ENCODE measurements at regions of chr11 and their contacts with region 1.

Region 1: DNA sequence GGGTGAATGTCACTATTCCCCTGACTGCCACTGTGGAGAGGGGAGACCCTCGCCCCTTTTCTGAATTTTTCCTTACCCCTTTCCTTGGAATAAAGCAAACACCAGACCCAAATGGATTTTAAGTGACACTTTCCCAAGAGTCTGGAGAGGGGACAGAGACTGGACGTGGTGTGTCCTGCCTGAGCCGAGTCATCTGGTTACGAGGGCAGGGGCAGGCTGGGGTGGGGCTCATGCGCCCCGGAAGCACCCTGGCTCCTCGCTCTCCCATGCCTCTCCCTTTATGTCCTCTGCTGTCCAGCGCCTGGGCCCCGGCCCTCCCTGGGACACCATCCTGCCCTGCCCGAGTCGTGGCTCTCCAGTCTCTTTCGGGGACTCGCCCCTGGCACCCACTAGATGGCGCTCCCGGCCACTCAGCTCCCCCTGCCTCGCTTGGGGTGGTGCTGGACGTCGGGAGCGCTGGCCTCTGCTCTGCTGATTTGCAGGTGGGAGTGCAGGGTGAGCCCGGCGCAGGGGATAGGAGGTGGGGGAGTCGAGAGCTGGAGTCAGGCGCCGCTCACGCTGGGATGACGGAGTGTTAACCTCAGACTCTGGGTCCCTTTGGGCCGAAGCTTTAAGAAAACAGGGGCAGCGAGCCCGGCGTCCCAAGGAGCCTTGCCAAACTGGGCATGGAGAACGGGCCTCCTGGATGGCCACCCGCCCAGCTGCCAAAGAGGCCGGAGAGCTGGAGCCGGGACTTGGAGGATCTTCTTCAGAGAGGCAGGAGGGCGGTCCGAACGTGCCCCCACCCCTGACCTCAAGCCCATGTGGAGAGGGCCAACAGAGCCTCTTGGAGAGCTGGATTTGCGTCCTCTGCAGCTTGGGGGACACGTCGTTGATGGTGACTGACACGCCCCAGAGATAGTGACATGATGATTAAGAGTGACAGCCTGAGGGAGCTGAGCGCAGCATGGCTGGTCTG is 89.9 kb downstream of the RPS6KA4 start:
- DNase-seq: peak; percentile 72
- ATAC-seq: peak; percentile 92
- H3K4me3 ChIP-seq: peak overlapping the region; percentile 48 to 59
- H3K27ac ChIP-seq: no peak overlapping the region; the same call in 1 of the 2 replicates
- H3K4me1 ChIP-seq: peaks cover 14 to 23% of the 10 kb centered on the region in 2 experiments
- H3K27me3 ChIP-seq: no peaks in the 10 kb centered on the region
- CTCF ChIP-seq: peak; percentile 88 to 94 (median 91)
- POLR2A ChIP-seq: no peak
- RAD21 ChIP-seq: peak; percentile 75

Region 2: DNA sequence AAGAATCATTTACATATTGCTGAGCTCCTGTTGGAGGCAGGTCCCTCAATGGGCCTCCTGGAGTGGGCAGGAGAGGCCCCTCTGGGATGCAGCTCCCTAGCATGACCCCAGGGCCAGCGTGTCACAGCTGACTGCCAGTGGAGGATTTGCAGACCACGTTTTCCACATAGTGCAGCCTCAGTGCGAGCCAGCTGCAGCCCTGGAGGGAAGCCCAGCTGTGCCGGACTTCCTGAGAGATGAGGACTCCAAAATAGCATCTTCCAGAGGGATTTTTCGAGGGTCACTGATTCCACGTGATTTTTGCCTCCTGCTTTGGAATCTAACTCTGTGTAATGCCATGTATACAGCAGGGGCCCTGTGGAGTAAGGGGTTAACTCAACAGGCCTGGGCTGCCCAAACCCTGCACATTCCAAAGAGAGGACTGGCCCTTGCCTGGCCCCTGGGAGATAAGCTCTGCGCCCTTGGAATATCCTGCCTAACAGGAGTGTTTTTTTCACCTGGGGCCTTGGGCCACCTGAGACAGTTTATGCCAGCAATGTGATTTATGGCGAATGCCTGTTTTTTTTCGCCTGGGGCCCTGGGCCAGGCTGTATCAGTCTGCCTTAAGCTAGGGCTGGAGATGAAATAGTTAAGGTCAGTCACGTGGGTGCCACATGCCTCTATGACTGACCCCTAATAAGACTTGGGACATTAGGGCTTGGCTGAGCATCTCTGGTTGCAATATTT is 42.5 kb before region 1 on chr11:
- CTCF ChIA-PET with region 1: interaction called, 11 read pairs
- POLR2A ChIA-PET with region 1: no interaction called
- RAD21 ChIA-PET with region 1: no interaction called
- intact Hi-C with region 1: no loop called
- DNase-seq: no peak
- ATAC-seq: no peak
- H3K4me3 ChIP-seq: no peak overlapping the region
- H3K27ac ChIP-seq: no peak overlapping the region
- H3K4me1 ChIP-seq: no peaks in the 10 kb centered on the region
- H3K27me3 ChIP-seq: no peaks in the 10 kb centered on the region
- CTCF ChIP-seq: no peak
- POLR2A ChIP-seq: no peak
- RAD21 ChIP-seq: no peak

Region 3: DNA sequence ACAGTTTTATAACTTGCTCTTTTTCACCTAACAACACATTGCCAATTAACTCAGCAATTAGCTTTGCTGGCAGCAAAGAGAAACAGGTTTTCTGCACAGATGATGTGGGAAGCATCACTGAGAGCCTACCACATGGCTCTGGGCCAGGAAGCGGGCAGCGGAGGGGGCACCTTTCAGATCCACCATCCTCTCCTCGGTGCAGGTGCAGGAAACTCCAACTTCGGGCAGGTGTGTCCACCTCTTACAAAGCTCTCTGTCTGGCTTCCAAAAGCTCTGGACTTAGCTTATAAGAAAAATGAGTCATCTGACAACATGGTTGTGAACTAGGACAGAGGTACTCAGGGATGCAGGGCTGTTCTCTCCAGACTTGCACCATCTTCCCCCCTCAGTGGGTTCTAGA is 12.9 kb before region 1 on chr11:
- CTCF ChIA-PET with region 1: interaction called, 18 read pairs
- POLR2A ChIA-PET with region 1: interaction called, 3 read pairs
- RAD21 ChIA-PET with region 1: interaction called in 1 of 2 experiments, 4 read pairs
- intact Hi-C with region 1: no loop called
- DNase-seq: no peak
- ATAC-seq: no peak
- H3K4me3 ChIP-seq: no peak overlapping the region
- H3K27ac ChIP-seq: no peak overlapping the region
- H3K4me1 ChIP-seq: no peaks in the 10 kb centered on the region
- H3K27me3 ChIP-seq: no peaks in the 10 kb centered on the region
- CTCF ChIP-seq: no peak
- POLR2A ChIP-seq: no peak
- RAD21 ChIP-seq: no peak

Region 4: DNA sequence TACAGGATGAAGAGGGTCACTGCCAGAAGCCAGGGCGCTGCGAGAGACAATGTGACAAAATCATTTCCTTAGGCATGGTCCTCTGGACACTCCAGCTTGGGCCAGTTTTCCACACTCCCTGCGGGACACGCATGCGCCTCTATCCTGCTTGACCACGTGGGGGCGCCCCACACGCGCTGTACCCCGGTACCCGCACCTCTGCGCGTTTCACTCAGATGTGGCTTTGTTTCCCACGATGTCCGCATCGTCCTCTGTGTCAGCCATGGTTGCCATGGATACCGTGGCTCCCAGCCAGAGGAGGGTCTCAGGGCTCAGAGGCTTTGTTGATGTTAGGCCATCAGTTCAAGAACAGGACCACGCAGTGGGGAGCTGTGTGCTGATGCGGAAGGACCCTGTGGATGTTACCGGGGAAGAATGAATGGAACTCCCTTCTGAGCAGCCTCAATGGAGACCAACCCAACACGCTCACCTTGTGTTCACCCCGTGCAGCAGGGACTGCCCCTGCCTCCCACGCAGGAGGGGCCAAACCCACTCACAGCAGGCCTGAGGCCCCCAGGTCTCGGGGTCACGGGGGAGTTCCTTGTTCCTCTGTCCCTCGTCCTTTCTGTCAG is 41.1 kb after region 1 on chr11:
- CTCF ChIA-PET with region 1: interaction called, 7 read pairs
- POLR2A ChIA-PET with region 1: no interaction called
- RAD21 ChIA-PET with region 1: interaction called in 1 of 2 experiments, 3 read pairs
- intact Hi-C with region 1: loop called (anchors 1 kb)
- DNase-seq: peak; percentile 29
- ATAC-seq: peak; percentile 99
- H3K4me3 ChIP-seq: no peak overlapping the region
- H3K27ac ChIP-seq: no peak overlapping the region
- H3K4me1 ChIP-seq: no peaks in the 10 kb centered on the region
- H3K27me3 ChIP-seq: peaks cover 31% of the 10 kb centered on the region
- CTCF ChIP-seq: peak; percentile 76 to 91 (median 81); a peak in 5 of 6 replicates
- POLR2A ChIP-seq: no peak
- RAD21 ChIP-seq: peak; percentile 92

Region 5: DNA sequence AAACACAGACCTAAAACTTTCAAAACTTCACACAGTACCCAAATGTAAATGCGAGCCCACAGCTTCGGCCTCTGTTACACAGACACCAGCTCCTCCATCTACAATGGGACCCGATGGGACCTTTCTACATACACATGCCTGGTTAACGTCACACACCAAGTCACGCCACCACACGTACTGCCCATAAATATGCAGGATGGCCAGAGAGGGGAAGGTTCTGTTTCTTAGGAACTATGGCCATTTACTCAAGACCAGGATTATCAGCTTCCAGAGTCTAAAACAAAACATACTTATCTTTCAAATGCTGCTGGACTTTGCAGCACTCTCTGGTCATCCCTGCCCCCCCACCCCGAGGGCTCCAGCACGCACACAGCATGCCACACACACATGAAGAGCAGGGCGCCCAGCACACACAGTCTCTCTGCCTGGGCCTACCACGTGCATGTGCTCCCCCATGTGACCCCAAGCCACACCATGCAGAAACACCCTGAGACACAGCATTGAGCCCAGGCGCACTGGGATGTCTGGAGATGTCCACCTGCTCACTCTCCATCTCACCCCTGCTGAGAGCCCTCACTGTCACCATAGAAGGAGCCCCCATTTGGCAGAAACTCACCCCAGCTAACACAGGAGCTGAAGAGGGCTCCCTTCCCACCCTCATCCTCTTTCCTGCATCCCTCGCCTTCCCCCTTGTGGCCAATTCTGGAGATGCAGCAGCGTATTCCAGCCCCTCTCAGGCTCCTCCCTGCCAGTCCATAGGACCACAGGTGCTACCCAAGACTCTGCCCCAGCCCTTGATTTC is 203.9 kb after region 1 on chr11:
- CTCF ChIA-PET with region 1: interaction called, 51 read pairs
- POLR2A ChIA-PET with region 1: no interaction called
- RAD21 ChIA-PET with region 1: interaction called in 1 of 2 experiments, 7 read pairs
- intact Hi-C with region 1: loop called (anchors 1 kb)
- DNase-seq: peak; percentile 63
- ATAC-seq: peak; percentile 91
- H3K4me3 ChIP-seq: no peak overlapping the region
- H3K27ac ChIP-seq: no peak overlapping the region
- H3K4me1 ChIP-seq: peaks cover 0 to 9% of the 10 kb centered on the region in 2 experiments; a peak in 3 of 4 replicates
- H3K27me3 ChIP-seq: no peaks in the 10 kb centered on the region
- CTCF ChIP-seq: peak; percentile 88 to 96 (median 89)
- POLR2A ChIP-seq: no peak
- RAD21 ChIP-seq: peak; percentile 93

Region 6: GRCh38 chr11:64659417-64660144 is 210.7 kb after region 1 on chr11:
- CTCF ChIA-PET with region 1: interaction called, 13 read pairs
- POLR2A ChIA-PET with region 1: no interaction called
- RAD21 ChIA-PET with region 1: no interaction called
- intact Hi-C with region 1: no loop called
- DNase-seq: peak; percentile 81
- ATAC-seq: peak; percentile 90
- H3K4me3 ChIP-seq: peak overlapping the region in 1 of 2 experiments; percentile 20; a peak in 1 of 4 replicates
- H3K27ac ChIP-seq: peak overlapping the region; percentile 34
- H3K4me1 ChIP-seq: peaks cover 8 to 29% of the 10 kb centered on the region in 2 experiments
- H3K27me3 ChIP-seq: no peaks in the 10 kb centered on the region
- CTCF ChIP-seq: no peak
- POLR2A ChIP-seq: no peak
- RAD21 ChIP-seq: peak; percentile 51